ENCODE measurements at regions of chr7 and their contacts with region 1.

Region 1: DNA sequence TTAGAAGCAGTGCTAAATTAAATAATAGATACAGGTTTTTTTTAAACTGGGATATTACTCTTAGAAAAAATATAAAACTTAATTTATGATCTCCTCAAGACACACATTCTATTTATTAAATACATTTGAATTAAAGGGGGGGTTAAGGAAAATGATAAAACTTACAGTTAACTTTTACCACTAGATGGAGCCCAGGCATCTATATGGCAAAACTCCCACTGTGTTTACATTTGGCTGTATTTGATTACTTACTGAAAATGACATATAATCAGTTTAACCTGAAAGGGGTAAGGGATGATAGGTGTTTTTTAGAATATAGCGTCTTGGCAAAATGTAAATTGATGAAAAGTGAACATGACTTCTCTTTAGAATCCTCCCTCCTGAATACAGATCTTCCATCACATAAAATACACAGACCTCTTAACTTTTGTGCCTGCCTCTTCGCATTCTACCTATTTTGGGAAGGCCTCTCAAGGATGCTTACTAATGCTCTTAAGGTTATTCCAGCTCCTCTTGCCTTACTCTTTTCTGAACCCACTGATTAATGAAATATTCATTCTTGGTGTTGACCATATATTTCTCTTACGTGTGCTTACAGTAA is 235.7 kb downstream of the AGMO start:
- DNase-seq: no peak

Region 2: DNA sequence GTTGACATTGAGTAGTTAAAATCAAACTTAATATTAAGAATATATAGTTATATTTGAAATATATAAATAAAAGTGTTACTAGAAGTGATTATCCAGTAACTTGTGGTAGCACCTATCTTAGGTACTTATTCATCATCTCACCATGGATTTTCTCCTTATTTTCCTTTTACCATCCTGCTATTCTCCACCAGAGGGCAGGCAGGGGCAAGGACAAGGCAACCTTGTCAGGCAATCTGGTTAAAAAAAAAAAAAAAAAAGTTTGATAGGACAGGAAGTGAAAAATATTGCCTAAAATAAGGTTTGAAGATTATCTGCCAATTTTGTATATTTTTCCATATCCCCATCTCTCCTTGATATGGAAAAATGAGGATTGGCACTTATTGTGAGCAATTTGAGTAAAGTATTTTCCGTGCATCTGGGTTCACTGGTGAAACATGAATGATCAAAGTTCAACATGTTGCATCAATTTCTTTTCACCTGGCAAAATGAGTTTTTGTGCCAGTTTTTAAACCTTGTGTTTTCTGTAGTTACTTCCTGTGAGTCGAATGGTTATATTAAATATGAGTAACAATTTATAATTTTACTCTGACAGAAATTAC is 21.0 kb before region 1 on chr7:
- intact Hi-C with region 1: no loop called
- DNase-seq: peak in 6 of 10 donors; percentile 14 to 76 (median 19)

Region 3: DNA sequence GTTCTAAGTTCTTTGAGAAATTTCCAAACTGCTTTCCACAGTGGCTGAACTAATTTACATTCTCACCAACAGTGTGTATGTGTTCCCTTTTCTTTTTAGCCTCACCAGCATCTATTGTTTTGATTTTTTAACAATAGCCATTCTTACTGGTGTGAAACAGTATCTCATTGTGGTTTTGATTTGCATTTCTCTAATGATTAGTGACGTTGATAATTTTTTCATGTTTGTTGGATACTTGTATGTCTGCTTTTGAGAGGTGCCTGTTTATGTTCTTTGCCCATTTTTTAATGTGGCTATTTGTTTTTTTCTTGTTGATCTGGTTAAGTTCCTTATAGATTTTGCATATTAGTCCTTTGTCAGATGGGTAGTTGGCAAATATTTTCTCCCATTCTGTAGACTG is 44.3 kb after region 1 on chr7:
- intact Hi-C with region 1: no loop called
- DNase-seq: no peak

Region 4: GRCh38 chr7:15555381-15555859 is 229.3 kb after region 1 on chr7:
- intact Hi-C with region 1: loop called (anchors 2 kb)
- DNase-seq: no peak

Region 5: DNA sequence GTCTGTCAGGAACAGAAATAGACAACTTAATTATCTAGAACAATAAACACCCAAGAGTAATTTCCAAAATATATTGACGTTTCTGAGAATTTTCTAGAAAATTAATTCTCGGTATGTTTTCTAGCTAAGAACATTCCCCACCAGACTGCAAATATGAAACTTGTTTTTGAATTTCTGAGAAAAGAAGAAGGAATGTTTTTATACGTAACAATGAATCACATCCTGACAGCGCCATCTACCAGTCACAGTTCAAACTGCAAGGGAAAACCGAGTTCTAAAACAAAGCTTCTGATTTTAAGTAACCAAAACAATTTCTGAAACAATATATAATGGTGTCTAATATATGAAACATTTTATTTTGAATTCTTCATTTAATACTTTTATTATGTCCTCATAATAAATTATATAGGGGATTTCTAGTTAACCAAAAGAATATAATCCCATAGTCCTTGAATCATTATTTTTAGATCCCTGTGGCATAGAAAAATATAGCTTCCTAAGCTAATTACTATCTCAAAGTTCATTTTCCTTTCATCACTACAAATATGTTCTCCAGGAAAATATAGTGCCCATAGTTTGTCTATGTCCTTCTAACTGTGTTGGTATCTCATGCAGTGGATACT is 394.8 kb after region 1 on chr7:
- intact Hi-C with region 1: loop called (anchors 5 kb)
- DNase-seq: peak in 3 of 10 donors; percentile 13 to 40 (median 30)

Region 6: DNA sequence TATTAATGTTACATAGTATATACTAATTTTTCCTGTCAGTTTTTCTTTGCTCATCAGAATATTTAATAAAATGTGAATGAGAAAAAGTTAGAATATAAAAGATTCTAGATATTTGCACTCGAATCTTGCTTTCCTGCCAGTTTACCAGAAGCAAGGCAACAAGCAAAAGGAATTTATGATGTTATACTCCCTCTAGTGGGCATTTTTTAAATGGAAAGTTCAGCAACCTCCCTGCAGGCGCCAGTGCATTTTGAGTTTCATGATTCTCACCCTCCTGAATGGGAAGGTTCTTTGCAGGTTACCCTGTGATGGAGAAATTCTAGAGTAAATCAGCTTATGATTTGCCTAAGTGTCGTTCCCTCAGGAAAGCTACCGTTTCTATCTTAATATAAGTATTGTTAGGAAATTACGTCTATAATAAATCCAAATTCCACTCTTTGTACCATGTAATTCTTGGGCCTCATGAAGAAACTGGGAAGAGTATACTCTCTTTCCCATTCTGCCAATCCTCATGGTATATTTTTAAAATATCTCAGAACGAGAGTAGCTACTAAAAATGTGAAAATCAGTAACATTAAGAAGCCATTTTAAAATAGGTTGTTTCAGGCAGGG is 745.2 kb after region 1 on chr7:
- intact Hi-C with region 1: loop called (anchors 2 kb)
- DNase-seq: no peak